Activated CD8-positive, alpha-beta memory T cell treated with anti-CD3 and anti-CD28 coated beads, Interleukin-2, amount 10 ng/mL, durations not matched to agents 7 days and 5 days (primary cell): ENCODE measurements at regions of chr9 and their contacts with region 1.

Region 1: DNA sequence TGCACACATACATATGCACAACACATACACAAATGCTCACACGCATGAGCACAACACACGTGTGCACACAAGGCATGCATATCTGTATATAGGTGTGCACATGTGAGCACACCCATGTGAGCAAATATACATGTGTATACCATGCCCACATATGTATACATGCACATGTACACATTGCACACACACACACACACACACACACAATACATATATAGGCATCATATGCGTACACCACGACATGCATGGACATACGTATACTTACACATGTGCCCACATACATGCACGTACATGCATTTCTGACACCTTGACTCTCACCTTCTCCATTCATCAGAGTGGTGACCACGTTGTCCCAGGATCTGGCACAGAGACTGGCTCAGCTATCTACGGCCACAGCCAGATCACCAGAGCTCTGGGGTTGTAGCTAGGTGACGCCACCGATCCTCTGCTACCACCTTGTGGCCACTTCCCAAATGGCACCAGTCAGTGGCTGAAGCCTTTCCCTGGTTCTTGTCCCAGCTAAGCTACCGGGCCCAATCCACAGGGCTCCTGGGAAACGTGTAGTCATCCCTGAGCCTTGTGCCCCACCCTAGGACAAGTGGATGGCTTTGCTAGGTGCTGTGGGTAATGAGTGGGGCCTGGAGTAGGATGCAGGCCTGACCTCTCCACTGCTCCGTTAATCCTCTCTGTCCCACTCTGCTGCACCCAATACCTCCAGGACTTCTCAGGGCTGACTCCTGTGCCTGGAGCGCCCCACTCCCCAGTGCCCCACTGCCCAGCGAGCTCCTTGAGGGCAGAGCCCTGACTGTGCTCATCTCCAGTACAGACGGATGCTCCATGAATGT is 194.4 kb downstream of the RGS3 start:
- DNase-seq: peak; percentile 86
- ATAC-seq: peak; percentile 92
- H3K4me3 Mint-ChIP-seq: no peak overlapping the region
- H3K27ac Mint-ChIP-seq: no peak overlapping the region
- H3K4me1 Mint-ChIP-seq: peaks cover 13% of the 10 kb centered on the region
- H3K27me3 Mint-ChIP-seq: peaks cover 25% of the 10 kb centered on the region

Region 2: GRCh38 chr9:113311961-113312360 is 346.0 kb before region 1 on chr9:
- CTCF ChIA-PET with region 1: interaction called, 10 read pairs
- DNase-seq: no peak
- ATAC-seq: no peak
- H3K4me3 Mint-ChIP-seq: no peak overlapping the region
- H3K27ac Mint-ChIP-seq: no peak overlapping the region
- H3K4me1 Mint-ChIP-seq: no peaks in the 10 kb centered on the region
- H3K27me3 Mint-ChIP-seq: peaks cover 4% of the 10 kb centered on the region

Region 3: GRCh38 chr9:113410207-113410864 is 247.6 kb before region 1 on chr9 and contains the starts of genes C9orf43 and POLE3:
- CTCF ChIA-PET with region 1: interaction called, 13 read pairs
- DNase-seq: peak; percentile 96
- ATAC-seq: peak; percentile 94
- H3K4me3 Mint-ChIP-seq: peak within 1 kb of the TSS; percentile 92
- H3K27ac Mint-ChIP-seq: peak within 1 kb of the TSS; percentile 99
- H3K4me1 Mint-ChIP-seq: peaks cover 37% of the 10 kb centered on the region
- H3K27me3 Mint-ChIP-seq: no peaks in the 10 kb centered on the region
- total RNA-seq, gene C9orf43: 0.16 to 0.41 TPM
- total RNA-seq, gene POLE3: 55.0 to 72.7 TPM

Region 4: GRCh38 chr9:113454914-113455761 is 202.8 kb before region 1 on chr9:
- CTCF ChIA-PET with region 1: interaction called, 151 read pairs
- DNase-seq: no peak
- ATAC-seq: peak; percentile 36
- H3K4me3 Mint-ChIP-seq: no peak overlapping the region
- H3K27ac Mint-ChIP-seq: no peak overlapping the region
- H3K4me1 Mint-ChIP-seq: peaks cover 10% of the 10 kb centered on the region
- H3K27me3 Mint-ChIP-seq: no peaks in the 10 kb centered on the region

Region 5: GRCh38 chr9:113578882-113579282 is 79.0 kb before region 1 on chr9:
- CTCF ChIA-PET with region 1: interaction called, 230 read pairs
- DNase-seq: peak; percentile 97
- ATAC-seq: peak; percentile 78
- H3K4me3 Mint-ChIP-seq: peak overlapping the region; percentile 65
- H3K27ac Mint-ChIP-seq: peak overlapping the region; percentile 95
- H3K4me1 Mint-ChIP-seq: peaks cover 65% of the 10 kb centered on the region
- H3K27me3 Mint-ChIP-seq: no peaks in the 10 kb centered on the region